ENCODE measurements at regions of chr9 and their contacts with region 1.

Region 1: DNA sequence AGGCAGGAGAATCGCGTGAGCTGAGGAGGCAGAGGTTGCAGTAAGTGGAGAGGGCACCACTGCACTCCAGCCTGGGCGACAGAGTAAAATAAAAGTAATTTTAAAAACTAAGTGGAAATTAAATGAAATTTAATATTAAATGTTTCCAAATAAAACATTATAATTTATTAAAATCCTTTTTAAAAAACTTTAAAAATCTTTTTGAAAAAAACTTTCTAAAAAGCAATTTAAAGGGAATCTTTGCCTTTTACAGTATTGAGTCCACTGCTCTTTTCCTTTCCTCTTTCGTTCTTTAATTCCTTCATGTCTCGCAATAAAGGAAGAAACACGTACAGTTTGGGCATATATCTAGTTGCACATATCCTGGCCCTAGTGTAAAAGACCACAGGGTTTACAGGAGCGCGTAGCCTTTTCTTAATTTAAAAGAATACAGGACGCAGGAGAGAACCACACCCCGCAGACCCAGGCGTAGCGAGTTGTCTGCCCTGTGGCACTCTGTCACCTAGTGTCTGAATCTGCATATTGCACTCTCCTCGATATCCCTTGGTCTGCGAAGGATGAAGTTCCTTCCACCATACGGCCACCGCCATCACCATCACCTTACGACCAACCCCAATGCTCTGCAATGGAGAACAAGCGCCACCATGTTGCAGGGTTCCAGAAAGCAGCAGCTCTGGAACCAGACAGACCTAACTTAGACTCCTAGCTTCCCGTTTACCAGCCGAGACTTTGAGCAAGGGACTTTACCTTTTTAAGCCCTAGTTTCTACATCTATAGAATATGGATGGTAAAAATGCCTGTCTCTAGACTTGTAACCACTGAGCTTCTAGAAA is 77.6 kb upstream of the DMRT1 start:
- DNase-seq: peak; percentile 71
- ATAC-seq: peak; percentile 96

Region 2: GRCh38 chr9:613771-614347 is 150.0 kb before region 1 on chr9:
- intact Hi-C with region 1: loop called (anchors 5 kb)
- DNase-seq: peak; percentile 72
- ATAC-seq: peak; percentile 89